Activated CD8-positive, alpha-beta T cell treated with anti-CD3 and anti-CD28 coated beads, Interleukin-2, amount 10 ng/mL, durations not matched to agents 7 days and 5 days (primary cell): ENCODE measurements at regions of chr11 and their contacts with region 1.

Region 1: GRCh38 chr11:2151500-2152257 is 9.3 kb downstream of the INS start:
- DNase-seq: peak; percentile 87
- ATAC-seq: peak; percentile 70
- H3K4me3 Mint-ChIP-seq: no peak overlapping the region
- H3K27ac Mint-ChIP-seq: no peak overlapping the region
- H3K4me1 Mint-ChIP-seq: peaks cover 5% of the 10 kb centered on the region
- H3K27me3 Mint-ChIP-seq: peaks cover 27% of the 10 kb centered on the region

Region 2: DNA sequence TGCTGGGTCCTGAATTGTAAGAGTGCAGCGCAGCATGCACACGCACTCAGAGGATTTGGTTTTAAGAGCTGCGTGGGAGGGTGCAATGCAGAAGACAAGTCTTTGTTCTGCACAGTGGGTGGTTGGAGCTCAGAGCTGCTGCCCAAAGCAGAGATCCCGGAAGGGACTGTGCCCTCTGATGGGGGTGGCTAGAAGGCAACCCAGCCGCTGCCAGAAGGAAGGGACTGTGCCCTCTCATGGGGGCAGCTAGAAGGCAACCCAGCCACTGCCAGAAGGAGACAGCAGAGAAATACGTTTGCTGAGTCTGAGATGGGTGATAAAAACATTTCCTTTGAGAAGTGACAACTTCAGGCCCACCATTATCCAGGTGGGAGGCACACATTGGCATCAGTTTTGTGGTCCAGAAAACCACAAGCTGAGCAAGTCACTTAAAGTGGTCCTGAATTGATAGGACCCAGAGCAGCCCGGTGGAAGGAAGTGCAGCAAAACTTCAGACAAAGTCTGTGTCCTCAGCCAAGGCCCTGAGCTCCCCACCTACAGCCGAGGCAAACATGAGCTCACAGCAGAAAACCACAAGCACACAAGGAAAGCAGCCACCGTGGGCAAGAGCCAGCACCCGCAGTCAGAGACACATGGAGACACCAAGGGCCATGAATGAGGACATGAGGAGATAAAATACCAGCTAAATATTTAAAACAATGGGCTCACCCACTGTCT is 450.4 kb before region 1 on chr11:
- CTCF ChIA-PET with region 1: interaction called, 10 read pairs
- POLR2A ChIA-PET with region 1: no interaction called
- DNase-seq: peak; percentile 41
- ATAC-seq: peak; percentile 47
- H3K4me3 Mint-ChIP-seq: no peak overlapping the region
- H3K27ac Mint-ChIP-seq: peak overlapping the region; percentile 2
- H3K4me1 Mint-ChIP-seq: peaks cover 30% of the 10 kb centered on the region
- H3K27me3 Mint-ChIP-seq: peaks cover 8% of the 10 kb centered on the region

Region 3: DNA sequence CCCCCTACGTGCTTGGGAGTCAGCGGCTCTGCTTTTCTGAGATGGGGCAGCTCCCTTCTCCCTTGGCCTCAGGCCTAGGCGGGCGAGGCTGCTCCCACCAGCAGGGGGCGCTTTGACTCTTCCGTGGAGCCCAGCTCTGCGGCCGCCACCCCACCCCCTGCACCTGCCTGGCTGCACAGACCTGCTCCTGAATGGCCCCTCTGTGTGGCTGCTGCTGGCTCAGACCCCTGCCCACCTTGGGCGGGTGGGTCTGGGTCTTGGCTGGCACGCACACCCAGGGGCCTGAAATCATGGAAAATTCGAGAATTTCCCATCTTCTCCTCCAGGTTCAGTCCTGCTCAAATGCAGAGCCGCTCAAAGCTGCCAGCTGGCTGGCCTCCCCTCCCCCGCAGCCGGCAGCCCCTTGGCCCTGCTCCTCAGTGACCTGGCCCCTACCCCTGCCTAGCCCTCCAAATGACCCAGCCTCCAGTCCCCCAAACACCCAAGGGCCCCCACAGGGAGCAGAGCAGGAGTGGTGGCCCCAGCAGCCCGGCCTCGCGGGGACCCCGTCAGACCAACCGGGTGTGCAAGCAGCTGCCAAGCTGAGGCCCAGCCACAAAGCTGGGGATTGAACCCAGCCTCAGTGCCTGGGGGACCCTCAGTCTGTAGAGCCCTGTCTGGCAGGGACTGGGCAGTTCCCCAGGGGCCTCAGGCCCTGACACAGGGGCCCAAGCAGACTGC is 269.0 kb before region 1 on chr11:
- CTCF ChIA-PET with region 1: interaction called, 15 read pairs
- POLR2A ChIA-PET with region 1: no interaction called
- DNase-seq: peak; percentile 83
- ATAC-seq: peak; percentile 85
- H3K4me3 Mint-ChIP-seq: no peak overlapping the region
- H3K27ac Mint-ChIP-seq: no peak overlapping the region
- H3K4me1 Mint-ChIP-seq: peaks cover 16% of the 10 kb centered on the region
- H3K27me3 Mint-ChIP-seq: no peaks in the 10 kb centered on the region

Region 4: GRCh38 chr11:1946812-1947484 is 204.7 kb before region 1 on chr11 and contains the start of gene MRPL23:
- CTCF ChIA-PET with region 1: interaction called, 12 read pairs
- POLR2A ChIA-PET with region 1: no interaction called
- DNase-seq: peak; percentile 33
- ATAC-seq: peak; percentile 87
- H3K4me3 Mint-ChIP-seq: no peak within 1 kb of the TSS
- H3K27ac Mint-ChIP-seq: no peak within 1 kb of the TSS
- H3K4me1 Mint-ChIP-seq: no peaks in the 10 kb centered on the region
- H3K27me3 Mint-ChIP-seq: no peaks in the 10 kb centered on the region
- total RNA-seq, gene MRPL23: 109 to 110 TPM

Region 5: DNA sequence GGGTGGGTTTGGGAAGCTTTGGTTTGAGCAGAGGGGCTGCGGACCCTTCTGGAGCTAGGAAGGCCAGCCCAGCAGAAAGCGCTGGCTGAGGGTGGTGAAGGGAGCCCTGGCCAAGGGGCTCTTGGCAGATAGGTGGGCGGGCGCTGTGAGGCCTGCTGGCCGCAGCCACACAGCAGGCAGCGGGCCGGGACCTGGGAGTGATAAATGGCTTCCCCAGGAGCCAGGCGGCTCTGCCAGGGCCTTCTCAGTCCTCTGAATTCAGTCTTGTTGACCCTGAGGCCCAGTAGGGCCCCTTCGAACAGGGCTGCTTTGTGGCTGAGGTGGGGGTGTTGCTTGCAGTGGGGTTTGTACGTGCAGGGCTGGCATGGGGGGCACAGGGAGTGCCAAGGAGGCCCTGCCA is 120.6 kb before region 1 on chr11:
- CTCF ChIA-PET with region 1: interaction called, 261 read pairs
- POLR2A ChIA-PET with region 1: interaction called, 3 read pairs
- DNase-seq: no peak
- ATAC-seq: no peak
- H3K4me3 Mint-ChIP-seq: no peak overlapping the region
- H3K27ac Mint-ChIP-seq: no peak overlapping the region
- H3K4me1 Mint-ChIP-seq: no peaks in the 10 kb centered on the region
- H3K27me3 Mint-ChIP-seq: no peaks in the 10 kb centered on the region

Region 6: DNA sequence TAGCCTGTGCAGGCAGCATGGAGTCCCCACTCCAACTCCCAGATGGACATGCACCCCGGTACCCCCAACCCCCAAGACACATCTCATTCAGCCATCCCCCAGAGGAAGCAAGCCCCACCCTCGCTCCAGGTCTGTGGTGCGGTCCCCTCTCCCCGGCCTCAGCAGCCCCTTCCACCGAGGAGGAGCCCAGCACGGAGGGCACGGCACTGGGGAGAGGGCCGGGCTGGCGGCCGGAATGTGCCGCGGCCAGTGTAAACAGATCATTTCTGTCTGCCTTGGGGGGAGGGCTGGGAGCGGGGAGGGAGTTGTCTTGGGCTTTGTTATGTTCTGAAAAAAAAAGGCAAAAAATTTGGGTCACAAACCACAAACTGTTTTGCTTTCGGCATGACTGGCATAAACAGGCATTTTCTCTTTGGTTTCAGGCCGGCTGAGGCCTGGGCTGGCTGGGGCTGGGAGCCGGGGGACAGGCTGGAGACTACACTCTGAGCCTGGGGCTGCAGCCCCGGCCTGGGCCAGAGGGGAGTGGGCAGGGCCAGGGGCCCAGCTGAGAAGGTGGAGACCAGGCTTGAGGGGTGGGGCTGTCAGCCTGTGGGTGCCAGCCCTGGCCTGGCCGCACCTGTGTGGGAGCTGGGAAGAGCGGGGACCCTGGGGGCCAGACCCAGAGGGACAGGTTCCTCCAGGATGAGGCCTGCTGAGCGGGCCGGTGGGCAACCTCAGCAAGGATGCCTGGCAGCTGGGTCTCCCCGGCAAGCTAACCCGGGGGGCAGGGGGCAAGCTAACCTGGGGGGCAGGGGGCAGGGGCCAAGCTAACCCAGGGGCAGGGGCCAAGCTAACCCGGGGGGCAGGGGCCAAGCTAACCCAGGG is 29.2 kb before region 1 on chr11:
- CTCF ChIA-PET with region 1: no interaction called
- POLR2A ChIA-PET with region 1: no interaction called
- DNase-seq: no peak
- ATAC-seq: no peak
- H3K4me3 Mint-ChIP-seq: no peak overlapping the region
- H3K27ac Mint-ChIP-seq: no peak overlapping the region
- H3K4me1 Mint-ChIP-seq: no peaks in the 10 kb centered on the region
- H3K27me3 Mint-ChIP-seq: peaks cover 8% of the 10 kb centered on the region

Region 7: GRCh38 chr11:2190657-2191471 is 39.2 kb after region 1 on chr11:
- CTCF ChIA-PET with region 1: no interaction called
- POLR2A ChIA-PET with region 1: no interaction called
- DNase-seq: no peak
- ATAC-seq: no peak
- H3K4me3 Mint-ChIP-seq: no peak overlapping the region
- H3K27ac Mint-ChIP-seq: no peak overlapping the region
- H3K4me1 Mint-ChIP-seq: no peaks in the 10 kb centered on the region
- H3K27me3 Mint-ChIP-seq: peaks cover 5% of the 10 kb centered on the region

Region 8: DNA sequence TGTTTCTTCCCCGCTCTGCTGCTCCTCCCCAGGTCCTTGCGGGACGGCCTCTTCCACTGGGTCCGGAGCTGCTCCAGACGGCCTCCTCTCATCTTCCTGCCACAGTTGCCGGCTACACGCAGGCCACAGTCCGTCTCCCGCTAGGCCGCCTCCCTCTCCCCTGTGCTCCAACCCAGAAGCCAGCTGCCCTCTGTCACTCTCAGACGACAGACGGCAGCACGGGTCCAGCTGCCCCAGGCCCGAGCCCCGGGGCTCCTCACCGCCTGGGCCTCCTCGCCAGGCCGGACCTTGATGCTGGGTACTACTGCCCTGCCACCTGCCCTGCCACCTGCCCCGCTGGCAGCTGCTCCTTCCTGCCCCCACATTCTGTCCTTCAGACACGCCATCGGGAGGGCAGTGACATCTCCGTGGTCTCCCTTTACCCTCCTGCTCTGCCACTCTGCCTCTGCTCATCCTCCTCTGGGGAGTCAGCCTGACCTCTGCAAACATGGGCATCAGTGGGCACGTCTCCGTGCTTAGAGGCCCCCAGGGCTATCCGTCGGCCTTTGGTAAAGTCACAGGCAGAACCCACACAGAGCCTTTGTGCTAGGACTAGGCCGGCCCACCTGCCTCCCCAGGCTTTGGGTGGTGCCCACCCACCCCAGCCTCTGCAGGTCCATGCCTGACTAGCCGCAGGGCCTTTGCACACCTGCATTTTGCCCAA is 63.0 kb after region 1 on chr11:
- CTCF ChIA-PET with region 1: no interaction called
- POLR2A ChIA-PET with region 1: no interaction called
- DNase-seq: no peak
- ATAC-seq: no peak
- H3K4me3 Mint-ChIP-seq: no peak overlapping the region
- H3K27ac Mint-ChIP-seq: peak overlapping the region; percentile 92
- H3K4me1 Mint-ChIP-seq: peaks cover 16% of the 10 kb centered on the region
- H3K27me3 Mint-ChIP-seq: peaks cover 2% of the 10 kb centered on the region

Region 9: GRCh38 chr11:2256923-2257716 is 105.4 kb after region 1 on chr11:
- CTCF ChIA-PET with region 1: no interaction called
- POLR2A ChIA-PET with region 1: no interaction called
- DNase-seq: no peak
- ATAC-seq: no peak
- H3K4me3 Mint-ChIP-seq: no peak overlapping the region
- H3K27ac Mint-ChIP-seq: no peak overlapping the region
- H3K4me1 Mint-ChIP-seq: no peaks in the 10 kb centered on the region
- H3K27me3 Mint-ChIP-seq: peaks cover 2% of the 10 kb centered on the region